Activated T-helper 2 cell treated with anti-CD3 and anti-CD28 coated beads, Interferon-gamma antibody, Interleukin-2, Interleukin-4, amounts not matched to agents 10 μg/mL and 5 μg/mL and 100 μg/mL, durations not matched to agents 14 hours and 24 hours and 36 hours (primary cell): ENCODE measurements at regions of chr13 and their contacts with region 1.

Region 1: GRCh38 chr13:98528663-98529570 is 48.0 kb downstream of the STK24 start:
- DNase-seq: no peak
- H3K4me3 Mint-ChIP-seq: no peak overlapping the region
- H3K27ac Mint-ChIP-seq: peak overlapping the region; percentile 83
- H3K4me1 Mint-ChIP-seq: peaks cover 70% of the 10 kb centered on the region
- H3K27me3 Mint-ChIP-seq: no peaks in the 10 kb centered on the region

Region 2: DNA sequence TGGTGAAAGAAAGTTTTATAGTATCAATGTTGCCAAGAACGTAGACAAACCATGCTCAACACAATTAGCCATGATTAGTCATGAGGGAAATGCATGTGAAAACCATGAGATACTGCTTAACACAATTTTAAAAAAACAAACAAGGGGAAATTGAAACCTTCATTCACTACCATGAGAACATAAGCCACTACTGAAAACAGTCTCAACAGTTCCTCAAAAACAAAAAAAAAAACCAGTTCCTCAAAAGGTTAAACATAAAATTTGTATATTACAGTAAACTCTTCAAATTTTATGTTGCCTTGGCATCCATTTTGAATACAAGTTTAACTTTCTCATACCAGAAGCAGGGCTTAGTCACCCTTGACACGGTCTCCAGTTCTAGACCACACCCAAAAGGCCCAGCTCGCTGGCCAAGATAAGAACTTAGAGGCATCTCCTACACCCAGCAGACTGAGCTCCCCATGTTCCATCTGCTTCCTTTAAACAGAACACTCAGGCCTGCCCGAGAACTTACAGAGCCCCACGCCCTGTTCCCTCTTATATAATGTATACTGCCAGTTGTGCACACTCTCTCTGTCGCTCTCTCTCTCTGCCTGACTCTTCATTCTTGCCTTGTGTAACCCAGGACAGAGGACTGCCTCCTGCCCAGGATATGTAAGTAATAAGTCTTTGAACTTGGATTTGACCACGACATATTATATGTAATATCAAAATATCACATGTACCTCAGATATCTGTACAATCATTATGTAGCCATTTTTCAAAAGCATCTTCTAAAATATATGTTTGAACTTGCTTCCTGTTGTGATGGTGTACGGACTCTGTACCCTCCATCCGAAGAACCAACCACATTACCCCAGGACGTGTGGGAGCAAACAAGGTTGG is 19.4 kb before region 1 on chr13:
- intact Hi-C with region 1: loop called (anchors 1 kb)
- DNase-seq: peak; percentile 43
- H3K4me3 Mint-ChIP-seq: peak overlapping the region; percentile 49
- H3K27ac Mint-ChIP-seq: peak overlapping the region; percentile 83
- H3K4me1 Mint-ChIP-seq: peaks cover 70% of the 10 kb centered on the region
- H3K27me3 Mint-ChIP-seq: no peaks in the 10 kb centered on the region

Region 3: GRCh38 chr13:98517576-98518310 is 11.2 kb before region 1 on chr13:
- intact Hi-C with region 1: loop called (anchors 1 kb)
- DNase-seq: no peak
- H3K4me3 Mint-ChIP-seq: peak overlapping the region; percentile 22
- H3K27ac Mint-ChIP-seq: peak overlapping the region; percentile 93
- H3K4me1 Mint-ChIP-seq: peaks cover 78% of the 10 kb centered on the region
- H3K27me3 Mint-ChIP-seq: no peaks in the 10 kb centered on the region

Region 4: DNA sequence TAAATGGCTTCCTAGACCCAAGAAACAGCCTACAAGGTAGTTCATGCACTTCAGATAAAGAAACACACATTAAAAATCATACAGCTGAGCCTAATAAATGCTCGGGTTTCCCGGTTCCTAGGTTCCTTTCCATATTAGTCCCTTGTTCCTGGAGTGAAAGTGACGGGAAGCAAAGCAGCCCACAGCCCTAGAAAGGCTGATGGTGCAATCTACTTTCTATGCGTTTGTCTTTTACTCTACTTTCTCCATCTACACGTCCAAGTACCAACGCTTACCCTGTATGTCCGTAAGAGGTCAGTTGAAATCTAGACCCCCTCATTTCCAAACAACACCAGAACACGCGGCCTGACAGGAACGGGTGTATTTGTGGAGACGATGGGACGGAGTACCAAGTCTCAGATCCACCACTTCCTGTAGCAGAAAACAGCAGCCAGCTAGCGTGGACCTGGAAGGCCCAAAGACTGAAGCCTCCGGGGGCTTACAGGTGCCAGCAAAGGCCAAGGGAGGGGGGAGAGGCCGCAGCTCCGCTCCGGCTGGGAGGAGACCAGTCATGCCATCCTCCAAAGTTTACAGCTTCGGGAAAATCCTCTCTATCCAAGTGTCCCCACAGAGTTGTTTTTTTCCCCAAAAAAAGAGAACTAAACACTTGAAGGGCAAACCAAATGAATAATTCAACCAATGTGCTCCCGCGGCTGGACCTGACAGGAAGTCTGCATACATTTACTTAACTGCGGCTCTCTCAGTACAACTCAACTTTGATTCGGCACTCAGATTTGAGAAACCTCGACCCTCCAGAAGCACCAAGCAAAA is 13.9 kb after region 1 on chr13:
- intact Hi-C with region 1: loop called (anchors 2 kb)
- DNase-seq: no peak
- H3K4me3 Mint-ChIP-seq: peak overlapping the region; percentile 68
- H3K27ac Mint-ChIP-seq: peak overlapping the region; percentile 82
- H3K4me1 Mint-ChIP-seq: peaks cover 74% of the 10 kb centered on the region
- H3K27me3 Mint-ChIP-seq: no peaks in the 10 kb centered on the region

Region 5: DNA sequence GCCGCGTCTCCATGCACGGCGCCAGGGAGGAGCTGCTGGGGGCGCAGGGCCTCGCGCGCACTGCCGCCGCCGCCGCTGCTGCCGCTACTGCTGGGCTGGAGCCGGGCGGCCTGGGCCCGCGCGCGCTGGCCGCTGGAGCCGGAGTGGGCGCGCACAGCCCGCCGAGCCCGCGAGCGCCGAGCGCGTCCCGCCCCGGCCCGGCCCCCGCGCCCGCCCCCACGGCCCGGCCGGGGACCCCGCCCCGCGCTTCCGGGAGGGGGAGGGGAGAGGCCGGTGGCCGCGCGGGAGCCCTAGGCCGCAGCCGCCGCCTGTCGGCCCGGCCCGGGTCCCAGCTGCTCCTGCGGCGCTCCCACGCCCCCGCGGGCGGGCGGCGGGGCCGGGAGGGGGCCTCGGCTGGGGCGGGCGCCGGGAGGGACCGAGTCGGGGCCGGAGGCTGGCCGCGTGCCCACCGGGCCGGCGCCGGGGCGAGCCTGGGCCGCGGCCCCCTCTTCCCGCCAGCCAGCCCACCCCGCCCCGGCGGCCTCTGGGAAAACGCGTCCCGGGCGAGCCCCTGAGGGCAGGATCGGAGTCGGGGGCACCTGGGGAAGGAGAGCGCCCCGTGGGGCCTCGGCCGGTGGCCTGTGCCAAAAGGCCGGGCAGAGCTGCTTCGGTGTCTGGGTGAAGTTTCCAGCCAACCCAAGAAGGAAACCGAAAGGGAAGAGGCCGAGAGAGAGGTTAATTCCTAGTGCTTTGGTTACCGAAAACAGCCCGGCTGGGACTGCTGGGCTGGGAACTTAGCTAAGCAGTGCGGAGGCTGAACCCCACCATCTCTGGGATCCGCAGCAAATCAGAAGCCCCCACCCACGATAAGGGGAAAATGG is 48.3 kb after region 1 on chr13 and contains the start of gene STK24:
- intact Hi-C with region 1: loop called (anchors 1 kb)
- DNase-seq: peak; percentile 60
- H3K4me3 Mint-ChIP-seq: peak within 1 kb of the TSS; percentile 98
- H3K27ac Mint-ChIP-seq: peak within 1 kb of the TSS; percentile 95
- H3K4me1 Mint-ChIP-seq: peaks cover 36% of the 10 kb centered on the region
- H3K27me3 Mint-ChIP-seq: no peaks in the 10 kb centered on the region
- total RNA-seq, gene STK24: 119 and 127 TPM in 2 replicates

Region 6: GRCh38 chr13:98598043-98598442 is 69.1 kb after region 1 on chr13:
- intact Hi-C with region 1: loop called (anchors 2 kb)
- DNase-seq: no peak
- H3K4me3 Mint-ChIP-seq: no peak overlapping the region
- H3K27ac Mint-ChIP-seq: no peak overlapping the region
- H3K4me1 Mint-ChIP-seq: peaks cover 18% of the 10 kb centered on the region
- H3K27me3 Mint-ChIP-seq: peaks cover 2% of the 10 kb centered on the region